Activated T-helper 2 cell treated with anti-CD3 and anti-CD28 coated beads, Interferon-gamma antibody, Interleukin-2, Interleukin-4, amounts not matched to agents 10 μg/mL and 5 μg/mL and 100 μg/mL, durations not matched to agents 14 hours and 24 hours and 36 hours (primary cell): ENCODE measurements at regions of chr1 and their contacts with region 1.

Region 1: GRCh38 chr1:109112652-109113285 is 1.1 kb upstream of the ELAPOR1 start:
- DNase-seq: peak; percentile 82
- H3K4me3 Mint-ChIP-seq: peak overlapping the region; percentile 69
- H3K27ac Mint-ChIP-seq: peak overlapping the region; percentile 64
- H3K4me1 Mint-ChIP-seq: peaks cover 36% of the 10 kb centered on the region
- H3K27me3 Mint-ChIP-seq: peaks cover 22% of the 10 kb centered on the region

Region 2: DNA sequence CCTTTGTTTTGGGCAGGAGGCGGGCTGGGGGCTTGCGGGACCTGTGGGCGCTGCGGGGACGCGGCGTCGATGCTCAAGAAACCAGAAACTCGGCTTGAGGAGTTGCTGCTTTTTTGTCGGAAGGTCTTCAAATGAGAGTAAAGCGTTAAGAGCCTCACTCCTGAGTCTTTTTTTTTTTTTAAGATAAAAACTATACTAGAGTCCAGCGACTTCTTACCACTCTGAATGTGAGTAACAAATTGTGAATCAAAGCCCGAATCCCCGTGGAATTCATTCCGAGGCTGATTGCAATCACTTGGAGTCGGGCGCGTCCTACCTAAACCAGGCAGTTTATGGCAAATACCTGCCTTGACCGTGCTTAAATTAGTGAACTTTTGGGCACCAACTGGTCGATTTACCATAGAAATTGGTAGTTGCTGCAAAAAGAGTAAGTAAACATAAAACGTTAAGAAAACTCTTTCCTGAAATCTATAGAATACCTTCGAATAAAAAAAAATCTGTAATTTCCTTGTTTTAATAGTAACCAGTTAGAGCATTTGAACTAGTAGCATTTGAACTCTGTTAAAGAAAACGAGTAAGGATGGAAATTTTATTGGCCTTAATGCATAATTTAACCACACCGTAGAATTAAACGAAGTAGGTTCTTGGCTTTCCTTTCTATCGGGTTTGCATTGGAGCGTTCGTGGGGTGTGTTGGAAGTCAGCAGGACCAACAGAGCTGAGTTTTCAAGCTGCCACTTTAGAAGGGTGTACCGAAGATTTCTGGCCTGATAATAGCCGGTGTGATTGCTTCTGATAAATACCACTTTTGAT is 235.2 kb before region 1 on chr1:
- intact Hi-C with region 1: loop called (anchors 5 kb)
- DNase-seq: no peak
- H3K4me3 Mint-ChIP-seq: peak overlapping the region; percentile 89
- H3K27ac Mint-ChIP-seq: peak overlapping the region; percentile 66
- H3K4me1 Mint-ChIP-seq: peaks cover 23% of the 10 kb centered on the region
- H3K27me3 Mint-ChIP-seq: peaks cover 10% of the 10 kb centered on the region

Region 3: DNA sequence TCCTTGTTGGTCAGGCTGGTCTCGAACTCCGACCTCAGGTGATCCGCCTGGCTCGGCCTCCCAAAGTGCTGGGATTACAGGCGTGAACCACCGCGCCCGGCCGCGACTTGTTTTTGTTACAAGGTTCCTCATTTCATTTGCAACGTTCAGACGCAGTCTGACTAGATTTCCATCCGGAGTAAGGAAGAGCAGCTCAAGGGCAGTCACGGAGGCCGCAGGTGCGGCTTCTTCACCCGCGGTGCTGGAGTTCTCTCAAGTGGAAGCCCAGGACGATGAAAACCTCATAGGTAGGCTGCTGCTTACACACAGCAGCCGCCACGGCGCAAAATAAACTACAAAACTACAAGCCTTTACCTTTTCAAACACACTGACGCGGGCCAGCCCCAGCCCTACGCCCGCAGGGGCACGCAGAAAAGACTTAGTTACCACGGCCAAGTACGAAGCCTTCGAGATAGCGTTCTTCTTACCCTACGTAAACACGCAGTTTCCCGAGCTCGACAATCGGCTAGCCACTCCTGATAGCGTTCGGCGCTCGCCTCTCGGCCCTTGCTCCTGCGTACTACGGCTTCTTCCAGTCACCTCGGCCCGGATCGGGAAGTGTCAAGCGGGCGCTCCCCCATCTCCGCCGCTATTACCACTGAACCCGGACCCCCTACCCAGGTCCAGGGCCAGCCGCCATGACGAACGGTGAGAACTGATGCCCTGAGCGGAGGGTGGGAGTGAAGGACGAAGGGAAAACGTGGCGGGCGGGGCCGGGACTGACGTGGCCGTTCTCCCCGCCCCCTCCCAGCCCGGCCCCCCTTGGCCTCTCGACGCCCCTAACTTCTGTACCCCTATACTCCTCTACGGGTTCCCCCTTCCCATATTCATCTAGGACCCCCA is 22.3 kb before region 1 on chr1 and contains the start of gene TMEM167B:
- intact Hi-C with region 1: loop called (anchors 1 kb)
- DNase-seq: peak; percentile 88
- H3K4me3 Mint-ChIP-seq: peak within 1 kb of the TSS; percentile 99
- H3K27ac Mint-ChIP-seq: peak within 1 kb of the TSS; percentile 96
- H3K4me1 Mint-ChIP-seq: peaks cover 25% of the 10 kb centered on the region
- H3K27me3 Mint-ChIP-seq: no peaks in the 10 kb centered on the region
- total RNA-seq, gene TMEM167B: 27.4 and 29.9 TPM in 2 replicates

Region 4: DNA sequence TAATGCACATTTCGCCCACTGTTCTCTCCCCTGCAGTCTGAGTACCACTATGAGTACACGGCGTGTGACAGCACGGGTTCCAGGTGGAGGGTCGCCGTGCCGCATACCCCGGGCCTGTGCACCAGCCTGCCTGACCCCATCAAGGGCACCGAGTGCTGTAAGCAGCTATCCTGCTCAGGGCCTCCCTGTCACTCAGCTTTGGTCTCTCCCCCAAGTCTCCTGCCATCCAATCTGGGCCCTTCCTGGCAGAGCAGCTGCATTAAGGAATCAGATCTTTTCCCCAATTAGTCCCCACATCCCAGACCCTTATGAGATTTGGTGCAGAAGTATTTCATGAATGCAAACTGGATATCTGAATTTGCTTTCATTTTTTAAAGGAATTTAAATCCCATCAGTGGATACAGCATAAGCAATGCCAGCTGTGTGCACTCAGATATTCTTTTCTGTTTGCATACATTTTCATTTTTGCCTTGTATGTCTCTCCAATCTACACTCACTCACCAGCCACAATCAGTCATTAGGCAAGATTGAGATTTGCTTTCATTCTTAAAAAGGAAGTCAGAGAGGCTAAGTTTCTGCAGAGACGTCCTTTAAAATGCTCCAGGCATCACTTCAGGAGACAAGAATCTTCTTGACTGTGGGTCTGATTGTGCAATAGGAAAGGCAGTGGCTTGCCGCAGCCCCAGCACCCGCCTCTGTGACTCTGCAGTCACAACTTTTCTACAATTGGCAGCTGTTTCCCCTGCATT is 49.3 kb after region 1 on chr1:
- intact Hi-C with region 1: loop called (anchors 1 kb)
- DNase-seq: peak; percentile 43
- H3K4me3 Mint-ChIP-seq: peak overlapping the region; percentile 40
- H3K27ac Mint-ChIP-seq: peak overlapping the region; percentile 9
- H3K4me1 Mint-ChIP-seq: peaks cover 22% of the 10 kb centered on the region
- H3K27me3 Mint-ChIP-seq: peaks cover 22% of the 10 kb centered on the region

Region 5: DNA sequence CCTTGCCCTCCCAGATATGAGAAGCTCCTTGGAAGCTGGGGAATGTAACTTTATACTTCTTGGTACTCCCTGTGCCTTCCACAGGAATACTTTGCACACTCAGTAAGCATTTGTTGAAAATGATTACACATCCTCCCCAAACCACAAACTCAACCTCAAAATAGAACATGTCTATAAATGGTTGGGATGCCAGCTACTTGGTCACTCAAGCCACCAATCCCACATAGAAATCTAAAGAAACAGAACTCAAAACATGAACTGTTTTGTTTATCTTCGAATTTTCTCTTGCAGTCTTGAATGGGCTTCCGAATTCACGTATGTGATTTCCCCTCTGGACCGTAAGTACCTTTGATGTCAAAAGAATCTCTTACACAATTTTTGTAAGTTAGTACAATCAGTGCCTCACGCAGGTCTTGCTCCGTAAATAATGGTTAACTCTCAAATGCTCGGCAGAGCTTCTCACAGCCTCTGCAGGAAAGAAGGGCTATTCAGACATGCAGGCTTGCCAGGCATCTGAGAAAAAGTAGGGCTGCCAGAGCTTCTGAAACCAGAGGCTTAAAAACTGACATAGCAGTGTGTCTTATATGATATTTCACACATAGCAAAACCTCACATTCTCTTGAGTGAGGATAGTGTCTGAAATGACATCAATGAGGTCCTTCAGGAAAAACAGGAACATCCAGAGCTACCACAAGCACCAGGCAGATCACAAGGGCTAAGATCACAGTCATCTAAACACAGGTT is 258.1 kb after region 1 on chr1:
- intact Hi-C with region 1: loop called (anchors 5 kb)
- DNase-seq: no peak
- H3K4me3 Mint-ChIP-seq: peak overlapping the region; percentile 43
- H3K27ac Mint-ChIP-seq: peak overlapping the region; percentile 46
- H3K4me1 Mint-ChIP-seq: peaks cover 47% of the 10 kb centered on the region
- H3K27me3 Mint-ChIP-seq: peaks cover 8% of the 10 kb centered on the region